HEK293T (cell line): ENCODE measurements at regions of chr17 and their contacts with region 1.

Region 1: GRCh38 chr17:74993453-74994021 is 6.1 kb downstream of the CDR2L start:
- DNase-seq: no peak

Region 2: GRCh38 chr17:74981979-74982662 is 11.4 kb before region 1 on chr17:
- CTCF ChIA-PET with region 1: no interaction called
- POLR2A ChIA-PET with region 1: interaction called, 11 read pairs
- DNase-seq: peak; percentile 89